ENCODE measurements at regions of chr9 and their contacts with region 1.

Region 1: GRCh38 chr9:96009690-96010472 is 134.4 kb downstream of the ERCC6L2 start:
- DNase-seq: peak in 34 of 35 experiments; percentile 40 to 81 (median 64)
- ATAC-seq: peak; percentile 67 to 80 (median 76)
- H3K4me3 ChIP-seq: no peak overlapping the region
- H3K4me3 Mint-ChIP-seq: peak overlapping the region in 1 of 3 donors; percentile 19
- H3K27ac ChIP-seq: peak overlapping the region; percentile 96
- H3K27ac Mint-ChIP-seq: peak overlapping the region in 1 of 2 donors; percentile 87
- H3K4me1 ChIP-seq: peaks cover 37 to 43% of the 10 kb centered on the region in 2 experiments
- H3K4me1 Mint-ChIP-seq: peaks cover 22 to 29% (median 24%) of the 10 kb centered on the region in 3 donors
- H3K27me3 ChIP-seq: no peaks in the 10 kb centered on the region
- H3K27me3 Mint-ChIP-seq: no peaks in the 10 kb centered on the region

Region 2: GRCh38 chr9:95480346-95480745 is 529.5 kb before region 1 on chr9:
- CTCF ChIA-PET with region 1: no interaction called
- POLR2A ChIA-PET with region 1: interaction called in 1 of 2 experiments, 15 read pairs
- DNase-seq: no peak
- ATAC-seq: no peak
- H3K4me3 ChIP-seq: no peak overlapping the region
- H3K4me3 Mint-ChIP-seq: no peak overlapping the region
- H3K27ac ChIP-seq: no peak overlapping the region
- H3K27ac Mint-ChIP-seq: no peak overlapping the region
- H3K4me1 ChIP-seq: peaks cover 0 to 3% of the 10 kb centered on the region in 2 experiments
- H3K4me1 Mint-ChIP-seq: peaks cover 7 to 16% (median 13%) of the 10 kb centered on the region in 3 donors
- H3K27me3 ChIP-seq: peaks cover 0 to 2% of the 10 kb centered on the region in 2 experiments
- H3K27me3 Mint-ChIP-seq: peaks cover 0 to 3% of the 10 kb centered on the region in 2 donors

Region 3: DNA sequence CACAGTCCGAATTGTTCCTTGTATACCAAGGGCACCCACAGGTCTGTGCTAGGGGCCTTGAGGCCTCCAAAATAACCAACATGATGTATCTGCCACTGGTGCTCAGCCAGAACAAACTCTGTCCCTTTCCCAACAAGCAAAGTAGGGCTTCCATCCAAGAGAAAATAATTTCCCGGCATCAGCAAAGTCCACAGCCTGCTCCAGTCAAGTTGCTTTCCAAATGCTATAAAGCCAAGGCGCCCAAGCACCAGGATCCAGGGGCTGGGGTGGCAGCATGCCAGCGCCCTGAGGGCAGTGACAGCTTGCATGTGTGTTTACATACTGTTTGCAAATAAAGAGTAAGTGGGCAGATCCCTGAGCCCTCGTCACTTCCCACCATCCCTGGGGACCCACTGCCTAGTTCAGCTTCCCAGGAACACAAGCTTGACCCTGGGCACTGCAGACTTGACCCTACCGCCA is 21.5 kb after region 1 on chr9:
- CTCF ChIA-PET with region 1: no interaction called
- POLR2A ChIA-PET with region 1: interaction called, 5 to 12 read pairs
- DNase-seq: no peak
- ATAC-seq: no peak
- H3K4me3 ChIP-seq: no peak overlapping the region
- H3K4me3 Mint-ChIP-seq: no peak overlapping the region
- H3K27ac ChIP-seq: no peak overlapping the region
- H3K27ac Mint-ChIP-seq: no peak overlapping the region
- H3K4me1 ChIP-seq: peaks cover 0 to 14% of the 10 kb centered on the region in 2 experiments
- H3K4me1 Mint-ChIP-seq: peaks cover 13 to 19% (median 16%) of the 10 kb centered on the region in 3 donors
- H3K27me3 ChIP-seq: peaks cover 8 to 28% of the 10 kb centered on the region in 2 experiments
- H3K27me3 Mint-ChIP-seq: peaks cover 14 to 16% of the 10 kb centered on the region in 2 donors